Activated CD4-positive, alpha-beta memory T cell treated with anti-CD3 and anti-CD28 coated beads for 36 hours (primary cell): ENCODE measurements at regions of chr2 and their contacts with region 1.

Region 1: DNA sequence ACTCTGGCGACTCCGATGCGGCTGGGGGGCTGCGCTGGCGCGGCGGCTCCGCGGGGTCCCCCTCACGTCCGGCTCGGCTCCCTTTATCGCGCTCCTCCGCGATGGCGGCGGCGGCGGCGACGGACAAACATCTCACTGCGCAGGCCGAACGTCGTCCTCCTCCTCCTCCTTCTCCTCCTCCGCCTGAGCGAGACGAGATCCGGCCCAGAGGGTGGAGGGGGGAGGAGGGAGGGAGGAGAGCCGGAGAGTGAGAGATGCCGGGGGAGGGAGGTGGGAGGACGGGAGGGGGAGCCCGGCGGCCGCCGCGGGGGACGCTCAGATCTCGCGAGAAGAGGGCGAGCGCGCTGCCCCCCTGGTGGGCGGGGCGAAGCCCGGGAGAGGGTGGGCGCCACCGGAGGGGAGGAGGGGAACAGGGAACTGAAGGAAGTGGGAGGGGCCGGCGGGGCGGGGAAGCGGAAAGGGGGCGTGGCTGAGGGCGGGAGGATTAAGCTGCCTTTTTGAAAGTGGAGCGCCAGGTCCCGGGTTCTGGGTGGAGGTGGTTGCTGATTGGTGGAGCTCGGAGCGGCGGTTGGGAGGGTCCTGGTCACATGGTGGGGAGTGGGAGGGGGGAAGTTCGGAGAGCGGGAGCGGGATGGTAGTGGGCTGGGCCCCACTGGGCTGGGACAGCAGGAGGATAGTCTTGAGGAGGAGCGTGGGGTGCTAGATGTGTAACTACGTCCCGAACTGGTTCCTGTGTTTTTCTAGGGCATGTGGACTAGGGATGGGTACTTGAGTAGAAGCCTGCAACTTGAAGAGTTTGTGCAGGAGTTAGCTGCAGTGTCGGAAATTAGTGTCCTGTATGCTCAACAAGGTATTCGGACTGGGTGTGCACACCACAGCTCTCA is at the start of gene CUL3:
- DNase-seq: peak; percentile 100
- H3K4me3 Mint-ChIP-seq: peak within 1 kb of the TSS; percentile 97
- H3K27ac Mint-ChIP-seq: peak within 1 kb of the TSS; percentile 92
- H3K4me1 Mint-ChIP-seq: peaks cover 31% of the 10 kb centered on the region
- H3K27me3 Mint-ChIP-seq: no peaks in the 10 kb centered on the region
- total RNA-seq, gene CUL3: 75.8 to 79.5 TPM

Region 2: DNA sequence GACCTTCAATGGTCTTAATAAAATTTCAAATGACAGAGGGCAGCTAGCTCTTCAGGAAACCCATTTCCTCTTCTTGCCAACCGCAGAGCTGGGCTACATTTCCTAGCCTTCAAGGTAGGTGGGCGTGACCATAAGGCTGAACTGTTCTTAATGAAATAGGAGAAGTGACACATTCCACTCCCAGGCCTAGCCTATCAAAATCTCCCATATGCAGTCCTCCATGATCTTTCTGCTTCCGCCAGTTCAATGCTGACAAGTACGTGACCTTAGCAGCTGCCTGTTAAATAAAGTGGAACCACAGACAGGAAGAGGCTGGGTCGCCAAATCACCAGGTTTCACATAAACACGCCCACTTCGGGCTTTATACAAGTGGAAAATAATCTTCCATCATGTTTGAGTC is 559.6 kb before region 1 on chr2:
- CTCF ChIA-PET with region 1: no interaction called
- POLR2A ChIA-PET with region 1: no interaction called
- intact Hi-C with region 1: loop called (anchors 5 kb)
- DNase-seq: peak; percentile 77
- H3K4me3 Mint-ChIP-seq: peak overlapping the region; percentile 30
- H3K27ac Mint-ChIP-seq: peak overlapping the region; percentile 85
- H3K4me1 Mint-ChIP-seq: peaks cover 48% of the 10 kb centered on the region
- H3K27me3 Mint-ChIP-seq: no peaks in the 10 kb centered on the region

Region 3: DNA sequence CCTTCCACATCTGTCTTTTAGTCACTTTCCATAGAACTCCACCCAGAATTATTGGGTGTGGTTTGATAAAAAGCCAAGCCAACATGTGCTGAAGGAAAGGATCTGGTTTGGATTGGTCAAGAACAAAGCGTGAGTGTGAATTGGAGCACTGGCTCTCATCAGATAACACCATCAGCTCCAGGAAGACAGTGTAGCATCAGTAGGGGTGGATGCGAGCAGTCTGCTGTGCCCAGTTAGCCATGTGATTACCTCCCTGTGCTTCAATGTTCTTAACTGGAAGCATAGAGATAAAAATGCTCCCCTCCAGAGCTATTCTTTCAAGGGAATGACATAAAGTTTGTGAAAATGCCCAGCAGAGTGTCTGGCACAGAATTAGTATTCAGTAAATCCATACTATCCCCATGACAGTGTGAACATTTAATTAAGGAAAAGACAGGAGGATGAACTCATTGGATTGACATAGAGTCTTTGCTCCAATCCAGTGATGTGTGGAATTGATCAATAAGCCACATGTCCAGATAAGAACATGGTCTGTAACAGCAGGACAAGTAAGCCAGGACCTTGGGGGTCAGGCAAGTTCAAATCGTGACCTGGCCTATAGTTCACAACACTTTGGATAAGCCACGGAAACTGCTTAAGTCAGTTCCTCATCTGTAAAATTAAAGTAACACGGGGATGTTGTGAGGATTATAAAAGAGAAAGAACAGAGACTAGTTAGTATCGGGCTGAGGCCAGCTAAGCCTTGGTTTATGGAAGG is 251.5 kb before region 1 on chr2:
- CTCF ChIA-PET with region 1: no interaction called
- POLR2A ChIA-PET with region 1: no interaction called
- intact Hi-C with region 1: no loop called
- DNase-seq: no peak
- H3K4me3 Mint-ChIP-seq: no peak overlapping the region
- H3K27ac Mint-ChIP-seq: no peak overlapping the region
- H3K4me1 Mint-ChIP-seq: no peaks in the 10 kb centered on the region
- H3K27me3 Mint-ChIP-seq: peaks cover 15% of the 10 kb centered on the region

Region 4: GRCh38 chr2:224520064-224520463 is 65.4 kb before region 1 on chr2:
- CTCF ChIA-PET with region 1: no interaction called
- POLR2A ChIA-PET with region 1: interaction called, 3 read pairs
- intact Hi-C with region 1: loop called (anchors 1 kb)
- DNase-seq: peak; percentile 71
- H3K4me3 Mint-ChIP-seq: no peak overlapping the region
- H3K27ac Mint-ChIP-seq: peak overlapping the region; percentile 9
- H3K4me1 Mint-ChIP-seq: peaks cover 53% of the 10 kb centered on the region
- H3K27me3 Mint-ChIP-seq: no peaks in the 10 kb centered on the region

Region 5: GRCh38 chr2:224570328-224570993 is 15.0 kb before region 1 on chr2:
- CTCF ChIA-PET with region 1: interaction called, 4 read pairs
- POLR2A ChIA-PET with region 1: interaction called, 5 read pairs
- intact Hi-C with region 1: loop called (anchors 1 kb)
- DNase-seq: no peak
- H3K4me3 Mint-ChIP-seq: peak overlapping the region; percentile 10
- H3K27ac Mint-ChIP-seq: peak overlapping the region; percentile 40
- H3K4me1 Mint-ChIP-seq: peaks cover 85% of the 10 kb centered on the region
- H3K27me3 Mint-ChIP-seq: no peaks in the 10 kb centered on the region

Region 6: GRCh38 chr2:224638301-224638823 is 52.9 kb after region 1 on chr2:
- CTCF ChIA-PET with region 1: interaction called, 4 read pairs
- POLR2A ChIA-PET with region 1: no interaction called
- intact Hi-C with region 1: loop called (anchors 1 kb)
- DNase-seq: peak; percentile 66
- H3K4me3 Mint-ChIP-seq: peak overlapping the region; percentile 30
- H3K27ac Mint-ChIP-seq: peak overlapping the region; percentile 89
- H3K4me1 Mint-ChIP-seq: peaks cover 10% of the 10 kb centered on the region
- H3K27me3 Mint-ChIP-seq: peaks cover 2% of the 10 kb centered on the region

Region 7: DNA sequence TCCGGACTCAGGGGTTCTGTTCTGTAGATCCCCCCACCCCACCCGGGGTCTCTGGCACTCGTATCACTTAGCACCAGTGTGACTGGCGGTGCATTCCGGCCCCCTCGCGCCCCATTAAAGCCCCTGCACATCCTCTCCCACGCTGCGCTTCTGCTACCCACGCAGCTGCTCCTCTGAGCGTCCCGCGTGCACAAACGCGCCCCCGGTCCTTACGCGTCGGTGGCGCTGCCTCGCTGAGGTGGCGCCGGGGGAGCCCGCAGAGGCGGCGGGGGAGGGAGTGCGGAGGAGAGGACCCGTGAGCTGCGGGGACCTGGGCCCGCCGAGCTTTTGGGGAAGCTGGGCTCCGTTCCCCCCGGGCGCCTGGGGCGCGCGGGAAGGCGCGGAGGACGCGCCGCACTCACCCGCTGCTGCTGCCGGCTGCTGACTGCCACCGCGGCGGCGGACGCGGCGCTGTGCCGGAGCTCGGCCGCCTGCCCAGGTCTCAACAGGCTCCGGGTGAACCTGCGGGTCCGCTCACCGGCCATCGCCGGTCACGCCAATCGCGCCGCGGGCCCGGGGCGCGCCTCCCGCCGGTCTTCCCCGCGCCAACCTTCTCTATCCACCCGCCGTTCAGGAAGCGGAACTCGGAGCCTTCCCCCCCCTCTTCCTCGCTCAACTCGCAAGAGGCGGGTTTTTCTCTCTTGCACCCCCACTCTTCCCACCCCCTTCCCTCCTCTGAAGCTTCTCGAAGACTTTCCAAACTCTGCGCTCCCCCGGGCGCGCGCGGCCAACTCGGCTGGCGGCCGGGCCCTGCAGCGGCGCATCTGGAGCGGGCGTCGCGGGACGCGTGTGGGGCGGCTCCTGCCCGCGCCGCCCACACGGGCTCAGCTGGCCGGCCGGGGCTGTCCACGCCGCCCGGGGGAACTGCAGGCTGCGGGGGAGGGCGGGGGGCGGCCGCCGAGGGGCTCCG is 456.7 kb after region 1 on chr2 and contains the start of gene DOCK10:
- CTCF ChIA-PET with region 1: no interaction called
- POLR2A ChIA-PET with region 1: no interaction called
- intact Hi-C with region 1: loop called (anchors 10 kb)
- DNase-seq: peak; percentile 67
- H3K4me3 Mint-ChIP-seq: peak within 1 kb of the TSS; percentile 88
- H3K27ac Mint-ChIP-seq: peak within 1 kb of the TSS; percentile 96
- H3K4me1 Mint-ChIP-seq: peaks cover 44% of the 10 kb centered on the region
- H3K27me3 Mint-ChIP-seq: no peaks in the 10 kb centered on the region
- total RNA-seq, gene DOCK10: 134 to 139 TPM